Ovary (tissue), 10 donors: ENCODE measurements at regions of chr16 and their contacts with region 1.

Region 1: GRCh38 chr16:15961060-15961511 is 11.7 kb downstream of the ABCC1 start:
- DNase-seq: no peak
- H3K4me3 ChIP-seq: no peak overlapping the region
- H3K27ac ChIP-seq: no peak overlapping the region
- H3K4me1 ChIP-seq: peaks cover 6% of the 10 kb centered on the region
- H3K27me3 ChIP-seq: no peaks in the 10 kb centered on the region
- CTCF ChIP-seq: no peak
- EP300 ChIP-seq: no peak
- POLR2A ChIP-seq: no peak

Region 2: GRCh38 chr16:15907863-15908478 is 53.1 kb before region 1 on chr16:
- intact Hi-C with region 1: loop called in 1 of 4 experiments (anchors 10 kb)
- DNase-seq: peak in 1 of 5 donors; percentile 4
- H3K4me3 ChIP-seq: no peak overlapping the region
- H3K27ac ChIP-seq: no peak overlapping the region
- H3K4me1 ChIP-seq: no peaks in the 10 kb centered on the region
- H3K27me3 ChIP-seq: no peaks in the 10 kb centered on the region
- CTCF ChIP-seq: no peak
- EP300 ChIP-seq: no peak
- POLR2A ChIP-seq: no peak

Region 3: GRCh38 chr16:15928261-15929104 is 32.6 kb before region 1 on chr16:
- intact Hi-C with region 1: no loop called
- DNase-seq: peak in 1 of 5 donors; percentile 11
- H3K4me3 ChIP-seq: no peak overlapping the region
- H3K27ac ChIP-seq: no peak overlapping the region
- H3K4me1 ChIP-seq: no peaks in the 10 kb centered on the region
- H3K27me3 ChIP-seq: no peaks in the 10 kb centered on the region
- CTCF ChIP-seq: no peak
- EP300 ChIP-seq: no peak
- POLR2A ChIP-seq: no peak